ENCODE measurements at regions of chr9 and their contacts with region 1.

Region 1: GRCh38 chr9:108386859-108387384 is 468.9 kb downstream of the ACTL7B start:
- DNase-seq: peak; percentile 85
- ATAC-seq: peak; percentile 87
- H3K4me3 ChIP-seq: no peak overlapping the region
- H3K27ac ChIP-seq: peak overlapping the region; percentile 47
- H3K4me1 ChIP-seq: peaks cover 6% of the 10 kb centered on the region
- H3K27me3 ChIP-seq: no peaks in the 10 kb centered on the region
- CTCF ChIP-seq: no peak
- POLR2A ChIP-seq: no peak
- RAD21 ChIP-seq: no peak

Region 2: DNA sequence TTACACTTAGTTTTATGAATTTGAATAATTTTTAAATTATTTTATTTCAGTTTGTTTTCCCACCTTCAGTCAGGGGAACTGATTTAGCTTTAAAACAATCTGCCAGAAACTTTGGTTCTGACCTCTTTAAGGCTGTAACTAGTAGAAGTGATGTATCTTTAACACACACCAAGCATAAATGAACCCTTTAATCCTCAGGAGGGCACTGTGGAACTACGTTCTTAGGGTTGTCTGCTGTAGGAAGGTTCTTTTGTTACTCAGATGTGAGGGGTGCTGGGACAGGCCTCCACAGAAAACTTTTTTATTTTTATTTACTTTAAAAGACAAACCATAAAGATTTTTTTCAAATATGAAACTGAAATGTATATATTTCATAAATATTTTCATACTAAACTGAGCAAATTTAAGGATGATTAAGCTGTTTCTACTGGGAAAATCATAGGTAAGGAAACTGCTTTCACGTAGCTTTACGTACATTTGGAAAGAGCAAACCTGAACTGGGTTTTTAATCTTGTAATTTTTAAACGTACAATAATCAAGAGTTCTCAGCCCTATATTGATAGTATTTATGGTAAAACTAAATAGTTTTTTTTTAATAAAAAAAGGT is 902.7 kb before region 1 on chr9:
- CTCF ChIA-PET with region 1: no interaction called
- POLR2A ChIA-PET with region 1: no interaction called
- dilution Hi-C with region 1: no loop called
- in situ Hi-C with region 1: no loop called
- intact Hi-C with region 1: loop called (anchors 5 kb)
- DNase-seq: peak; percentile 81
- ATAC-seq: peak; percentile 74
- H3K4me3 ChIP-seq: no peak overlapping the region
- H3K27ac ChIP-seq: no peak overlapping the region
- H3K4me1 ChIP-seq: peaks cover 2% of the 10 kb centered on the region
- H3K27me3 ChIP-seq: no peaks in the 10 kb centered on the region
- CTCF ChIP-seq: peak; percentile 66
- POLR2A ChIP-seq: peak; percentile 82
- RAD21 ChIP-seq: peak; percentile 78

Region 3: GRCh38 chr9:107715740-107716139 is 671.2 kb before region 1 on chr9:
- CTCF ChIA-PET with region 1: no interaction called
- POLR2A ChIA-PET with region 1: interaction called, 17 read pairs
- dilution Hi-C with region 1: no loop called
- in situ Hi-C with region 1: no loop called
- intact Hi-C with region 1: no loop called
- DNase-seq: no peak
- ATAC-seq: no peak
- H3K4me3 ChIP-seq: no peak overlapping the region
- H3K27ac ChIP-seq: no peak overlapping the region
- H3K4me1 ChIP-seq: peaks cover 6% of the 10 kb centered on the region
- H3K27me3 ChIP-seq: peaks cover 3% of the 10 kb centered on the region
- CTCF ChIP-seq: no peak
- POLR2A ChIP-seq: no peak
- RAD21 ChIP-seq: no peak